ENCODE measurements at regions of chr1 and their contacts with region 1.

Region 1: GRCh38 chr1:162854245-162854882 is 6.6 kb downstream of the CCDC190 start:
- DNase-seq: peak in 2 of 3 donors; percentile 55 to 57
- ATAC-seq: peak; percentile 80 to 88 (median 84)
- H3K4me3 ChIP-seq: no peak overlapping the region
- H3K27ac ChIP-seq: no peak overlapping the region
- H3K4me1 ChIP-seq: no peaks in the 10 kb centered on the region
- H3K27me3 ChIP-seq: no peaks in the 10 kb centered on the region
- CTCF ChIP-seq: peak; percentile 65 to 85 (median 84)
- POLR2A ChIP-seq: no peak

Region 2: DNA sequence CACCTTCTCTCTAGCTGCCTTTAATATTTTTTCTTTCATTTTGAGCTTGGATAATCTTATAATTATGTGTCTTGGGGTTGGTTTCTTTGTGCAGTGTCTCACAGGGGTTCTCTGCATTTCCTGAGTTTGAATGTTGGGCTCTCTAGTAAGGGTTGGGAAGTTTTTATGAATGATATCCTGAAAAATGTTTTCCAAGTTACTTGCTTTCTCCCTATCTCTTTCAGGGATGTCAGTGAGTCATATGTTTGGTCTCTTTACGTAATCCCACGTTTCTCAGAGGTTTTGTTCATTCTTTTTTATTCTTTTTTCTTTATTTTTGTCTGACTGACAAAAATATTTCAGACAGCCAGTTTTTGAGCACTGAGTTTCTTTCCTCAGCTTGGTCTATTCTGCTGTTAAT is 62.0 kb after region 1 on chr1:
- intact Hi-C with region 1: no loop called
- DNase-seq: no peak
- ATAC-seq: no peak
- H3K4me3 ChIP-seq: no peak overlapping the region
- H3K27ac ChIP-seq: no peak overlapping the region
- H3K4me1 ChIP-seq: no peaks in the 10 kb centered on the region
- H3K27me3 ChIP-seq: no peaks in the 10 kb centered on the region
- CTCF ChIP-seq: no peak
- POLR2A ChIP-seq: no peak

Region 3: GRCh38 chr1:163174524-163175437 is 320.4 kb after region 1 on chr1:
- intact Hi-C with region 1: loop called (anchors 10 kb)
- DNase-seq: peak; percentile 57 to 62 (median 58)
- ATAC-seq: peak; percentile 75 to 84 (median 80)
- H3K4me3 ChIP-seq: no peak overlapping the region
- H3K27ac ChIP-seq: no peak overlapping the region
- H3K4me1 ChIP-seq: no peaks in the 10 kb centered on the region
- H3K27me3 ChIP-seq: no peaks in the 10 kb centered on the region
- CTCF ChIP-seq: peak; percentile 79 to 88 (median 84)
- POLR2A ChIP-seq: no peak

Region 4: DNA sequence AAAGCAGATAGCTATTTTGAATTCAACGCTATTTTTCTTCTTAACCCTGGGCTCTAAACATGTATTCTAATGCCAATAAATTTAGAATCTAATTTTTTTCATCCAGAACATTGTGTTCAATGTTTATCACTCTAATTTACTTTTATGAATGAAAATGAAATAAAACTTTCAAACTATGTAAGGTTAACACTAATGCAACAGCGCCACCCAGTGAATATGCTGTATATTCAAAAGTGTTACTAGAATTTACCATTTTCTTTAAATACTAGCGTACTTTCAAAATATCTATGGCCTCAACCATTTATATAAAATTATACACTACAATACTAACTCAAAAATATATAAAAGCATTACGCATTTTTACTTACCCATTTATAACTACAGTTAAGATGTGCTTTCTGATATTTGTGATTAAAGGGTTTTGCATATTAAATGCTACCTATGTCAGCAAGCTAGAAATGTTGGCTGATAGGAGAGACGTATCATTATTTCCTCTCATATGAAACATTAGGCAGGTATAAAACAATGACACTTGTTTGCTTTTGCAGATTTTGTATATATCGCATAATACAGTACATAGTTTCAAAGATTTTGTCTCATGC is 461.5 kb after region 1 on chr1:
- intact Hi-C with region 1: loop called (anchors 5 kb)
- DNase-seq: no peak
- ATAC-seq: peak in 2 of 4 donors; percentile 52 to 62
- H3K4me3 ChIP-seq: no peak overlapping the region
- H3K27ac ChIP-seq: no peak overlapping the region
- H3K4me1 ChIP-seq: no peaks in the 10 kb centered on the region
- H3K27me3 ChIP-seq: no peaks in the 10 kb centered on the region
- CTCF ChIP-seq: peak; percentile 66 to 76 (median 72)
- POLR2A ChIP-seq: no peak

Measured in right lobe of liver (tissue), 6 donors.